Heart left ventricle (tissue), 16 donors: ENCODE measurements at regions of chr2 and their contacts with region 1.

Region 1: DNA sequence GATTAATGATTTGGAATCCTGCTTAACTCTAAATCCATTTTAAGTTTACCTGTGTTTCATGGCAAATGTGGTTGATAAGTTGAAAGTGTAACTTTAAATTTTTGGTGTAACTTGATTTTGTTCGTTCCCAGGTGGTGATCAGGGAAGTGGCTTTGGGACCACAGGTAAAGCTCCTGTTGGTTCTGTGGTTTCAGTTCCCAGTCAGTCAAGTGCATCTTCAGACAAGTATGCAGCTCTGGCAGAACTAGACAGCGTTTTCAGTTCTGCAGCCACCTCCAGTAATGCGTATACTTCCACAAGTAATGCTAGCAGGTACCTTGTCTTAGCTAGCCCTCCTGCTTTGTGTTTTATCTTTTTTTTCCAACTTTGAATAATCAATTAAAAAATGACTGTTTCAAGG is 62.8 kb downstream of the AGFG1 start:
- DNase-seq: no peak
- ATAC-seq: no peak
- H3K4me3 ChIP-seq: no peak overlapping the region
- H3K27ac ChIP-seq: no peak overlapping the region
- H3K4me1 ChIP-seq: no peaks in the 10 kb centered on the region
- H3K27me3 ChIP-seq: no peaks in the 10 kb centered on the region
- CTCF ChIP-seq: no peak
- POLR2A ChIP-seq: no peak

Region 2: GRCh38 chr2:227443889-227444568 is 90.7 kb before region 1 on chr2:
- intact Hi-C with region 1: no loop called
- DNase-seq: no peak
- ATAC-seq: no peak
- H3K4me3 ChIP-seq: no peak overlapping the region
- H3K27ac ChIP-seq: no peak overlapping the region
- H3K4me1 ChIP-seq: no peaks in the 10 kb centered on the region
- H3K27me3 ChIP-seq: no peaks in the 10 kb centered on the region
- CTCF ChIP-seq: no peak
- POLR2A ChIP-seq: no peak

Region 3: DNA sequence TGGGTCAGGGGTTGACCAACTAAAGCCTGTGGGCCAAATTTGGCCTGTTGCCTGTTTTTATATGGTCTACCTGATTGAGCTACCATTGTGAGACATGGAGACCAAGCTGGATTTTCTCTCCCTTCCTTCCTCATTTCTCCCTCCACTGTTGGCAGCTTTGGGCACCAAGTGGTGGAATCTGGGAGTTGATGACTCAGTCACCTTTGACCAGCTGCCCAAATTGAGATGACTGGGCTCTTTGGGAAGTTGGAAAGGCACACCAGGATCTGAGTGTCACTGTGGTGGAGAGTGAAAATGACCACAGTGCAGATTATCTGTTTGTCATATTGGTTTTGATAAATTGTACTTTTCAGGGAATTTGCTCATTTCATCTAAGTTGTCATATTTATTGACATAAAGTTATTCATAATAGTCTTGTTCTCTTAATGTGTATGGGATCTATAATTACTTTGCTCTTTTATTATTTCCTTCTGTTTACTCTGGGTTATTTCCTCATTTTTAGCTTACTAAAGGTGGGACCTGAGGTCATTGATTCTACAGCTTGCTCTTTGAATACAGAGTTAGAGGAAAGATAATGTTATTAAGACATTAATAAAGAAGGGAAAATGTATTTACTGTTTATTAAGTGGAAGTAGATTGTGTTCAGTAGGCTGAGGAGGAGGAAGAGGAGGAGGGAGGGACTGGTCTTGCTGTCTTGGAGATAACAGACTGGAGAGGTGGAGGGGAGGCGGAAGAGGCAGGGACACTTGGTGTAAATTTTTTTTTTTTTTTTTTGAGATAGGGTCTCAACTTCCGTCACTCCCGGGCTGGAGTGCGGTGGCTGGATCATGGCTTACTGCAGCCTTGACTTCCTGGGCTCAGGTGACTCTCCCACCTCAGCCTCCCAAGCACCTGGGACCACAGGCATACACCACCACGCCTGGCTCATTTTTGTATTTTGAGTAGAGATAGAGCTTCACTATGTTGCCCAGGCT is 31.0 kb before region 1 on chr2:
- intact Hi-C with region 1: loop called in 1 of 10 experiments (anchors 1 kb)
- DNase-seq: peak in 2 of 5 donors; percentile 29 to 47
- ATAC-seq: peak; percentile 49 to 84 (median 64)
- H3K4me3 ChIP-seq: no peak overlapping the region
- H3K27ac ChIP-seq: peak overlapping the region in 1 of 12 donors; percentile 42
- H3K4me1 ChIP-seq: peaks cover 0 to 79% (median 49%) of the 10 kb centered on the region in 12 donors
- H3K27me3 ChIP-seq: no peaks in the 10 kb centered on the region
- CTCF ChIP-seq: no peak
- POLR2A ChIP-seq: no peak

Region 4: DNA sequence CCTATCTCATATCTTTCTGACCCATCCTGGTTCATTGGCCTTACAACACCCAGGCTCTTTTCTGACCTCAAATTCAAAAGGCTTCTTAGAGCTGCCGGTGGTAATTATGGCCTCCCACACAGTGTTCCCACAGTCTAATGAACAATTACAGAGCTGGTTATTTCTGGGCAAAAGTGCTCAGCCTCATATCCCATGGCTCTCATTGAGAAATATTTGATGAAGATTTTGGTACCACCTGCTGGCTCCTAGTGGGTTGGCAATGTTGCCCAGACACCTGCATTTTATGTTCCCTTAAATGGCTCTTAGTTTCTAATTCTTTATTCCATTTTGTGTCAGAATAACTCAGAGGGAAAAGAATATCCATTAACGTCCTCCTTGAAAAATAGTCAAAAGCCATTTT is 43.9 kb after region 1 on chr2:
- intact Hi-C with region 1: no loop called
- DNase-seq: no peak
- ATAC-seq: no peak
- H3K4me3 ChIP-seq: no peak overlapping the region
- H3K27ac ChIP-seq: no peak overlapping the region
- H3K4me1 ChIP-seq: no peaks in the 10 kb centered on the region
- H3K27me3 ChIP-seq: peaks cover 0 to 6% (median 0%) of the 10 kb centered on the region in 9 donors
- CTCF ChIP-seq: no peak
- POLR2A ChIP-seq: no peak